Calu3 (cell line): ENCODE measurements at regions of chr17 and their contacts with region 1.

Region 1: GRCh38 chr17:32275060-32276042 is 9.7 kb downstream of the RHBDL3 start:
- DNase-seq: peak; percentile 28
- H3K4me3 Mint-ChIP-seq: no peak overlapping the region
- H3K27ac Mint-ChIP-seq: no peak overlapping the region
- H3K4me1 Mint-ChIP-seq: no peaks in the 10 kb centered on the region
- H3K27me3 Mint-ChIP-seq: peaks cover 57% of the 10 kb centered on the region
- CTCF ChIP-seq: no peak

Region 2: GRCh38 chr17:31570951-31571892 is 704.1 kb before region 1 on chr17:
- CTCF ChIA-PET with region 1: no interaction called
- intact Hi-C with region 1: no loop called
- DNase-seq: no peak
- H3K4me3 Mint-ChIP-seq: no peak overlapping the region
- H3K27ac Mint-ChIP-seq: no peak overlapping the region
- H3K4me1 Mint-ChIP-seq: peaks cover 25% of the 10 kb centered on the region
- H3K27me3 Mint-ChIP-seq: no peaks in the 10 kb centered on the region
- CTCF ChIP-seq: no peak

Region 3: GRCh38 chr17:32114536-32114935 is 160.8 kb before region 1 on chr17:
- CTCF ChIA-PET with region 1: interaction called, 10 read pairs
- intact Hi-C with region 1: no loop called
- DNase-seq: no peak
- H3K4me3 Mint-ChIP-seq: no peak overlapping the region
- H3K27ac Mint-ChIP-seq: no peak overlapping the region
- H3K4me1 Mint-ChIP-seq: peaks cover 7% of the 10 kb centered on the region
- H3K27me3 Mint-ChIP-seq: no peaks in the 10 kb centered on the region
- CTCF ChIP-seq: no peak

Region 4: GRCh38 chr17:32161506-32162365 is 113.6 kb before region 1 on chr17:
- CTCF ChIA-PET with region 1: no interaction called
- intact Hi-C with region 1: no loop called
- DNase-seq: peak; percentile 44
- H3K4me3 Mint-ChIP-seq: no peak overlapping the region
- H3K27ac Mint-ChIP-seq: peak overlapping the region; percentile 22
- H3K4me1 Mint-ChIP-seq: peaks cover 16% of the 10 kb centered on the region
- H3K27me3 Mint-ChIP-seq: no peaks in the 10 kb centered on the region
- CTCF ChIP-seq: no peak